Activated B cell treated with CpG ODN at 0.5 μM for 24 hours (primary cell): ENCODE measurements at regions of chr10 and their contacts with region 1.

Region 1: DNA sequence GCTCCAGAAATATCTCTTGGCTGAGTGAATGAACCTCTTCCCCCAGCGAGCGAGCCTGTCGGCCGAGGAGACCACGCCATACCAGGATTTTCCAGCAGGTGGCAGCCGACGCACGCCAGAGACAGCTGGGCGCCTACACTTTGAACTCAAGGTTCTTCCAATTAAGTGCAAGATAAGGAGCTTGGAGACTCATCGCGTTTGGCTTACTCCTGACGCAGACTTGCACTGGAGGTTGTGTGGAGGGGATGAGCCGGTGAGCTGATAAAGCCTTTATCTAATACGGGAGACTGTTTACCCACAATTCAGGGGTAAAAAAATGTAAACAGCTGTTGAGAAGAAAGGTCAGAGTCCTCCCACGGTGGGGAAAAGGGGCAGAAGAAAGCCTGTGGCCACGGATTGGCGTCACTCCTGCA is 45.9 kb upstream of the EMX2 start:
- DNase-seq: peak; percentile 58
- ATAC-seq: peak; percentile 47
- H3K4me3 Mint-ChIP-seq: no peak overlapping the region
- H3K27ac Mint-ChIP-seq: no peak overlapping the region
- H3K4me1 Mint-ChIP-seq: no peaks in the 10 kb centered on the region
- H3K27me3 Mint-ChIP-seq: peaks cover 22% of the 10 kb centered on the region
- CTCF ChIP-seq: peak; percentile 69

Region 2: DNA sequence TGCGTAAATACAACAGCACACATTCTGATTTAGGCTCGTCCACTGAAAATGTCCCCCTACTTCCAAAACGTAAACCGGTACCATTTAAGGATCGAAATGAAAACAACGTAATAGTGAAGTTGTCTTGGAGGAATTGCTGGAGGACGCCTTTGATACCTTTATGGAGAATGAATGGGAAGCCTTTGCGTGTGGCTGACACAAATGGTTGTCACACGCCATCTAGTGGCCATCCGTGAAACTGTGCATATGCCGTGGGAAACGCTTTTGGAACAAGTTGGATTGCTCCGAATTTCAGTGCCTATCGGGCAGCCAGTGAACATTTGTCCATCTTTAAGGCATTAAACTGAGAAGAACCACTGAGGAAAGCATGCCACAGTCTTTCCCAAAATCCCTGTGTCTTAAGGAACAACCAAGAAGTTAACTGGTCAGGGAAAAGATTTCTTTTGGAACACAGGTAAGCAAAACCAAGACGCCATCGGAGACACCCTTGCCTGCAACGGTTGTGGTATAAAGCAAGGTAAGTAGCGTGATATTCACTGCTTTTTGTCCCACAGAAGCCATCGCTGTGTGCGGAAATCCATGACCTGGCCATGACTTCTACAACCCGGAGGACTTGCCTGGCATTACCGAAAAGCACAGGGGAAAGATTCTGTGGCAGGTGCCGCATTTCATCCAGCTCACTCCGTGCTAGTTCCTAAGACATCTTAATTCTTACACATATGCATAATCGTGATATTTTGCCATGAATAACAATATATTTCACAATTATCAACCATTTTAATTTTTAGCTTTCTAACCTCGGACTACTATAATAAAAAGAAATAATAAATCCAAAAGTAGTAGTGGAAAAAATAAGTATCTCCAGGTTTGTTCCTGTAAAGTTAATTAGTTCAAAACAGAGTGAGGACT is 744.9 kb after region 1 on chr10:
- CTCF ChIA-PET with region 1: interaction called, 67 read pairs
- POLR2A ChIA-PET with region 1: no interaction called
- intact Hi-C with region 1: loop called (anchors 1 kb)
- DNase-seq: peak; percentile 36
- ATAC-seq: no peak
- H3K4me3 Mint-ChIP-seq: no peak overlapping the region
- H3K27ac Mint-ChIP-seq: no peak overlapping the region
- H3K4me1 Mint-ChIP-seq: no peaks in the 10 kb centered on the region
- H3K27me3 Mint-ChIP-seq: peaks cover 38% of the 10 kb centered on the region
- CTCF ChIP-seq: peak; percentile 99

Region 3: GRCh38 chr10:118423800-118424479 is 927.3 kb after region 1 on chr10:
- CTCF ChIA-PET with region 1: interaction called, 6 read pairs
- POLR2A ChIA-PET with region 1: no interaction called
- intact Hi-C with region 1: loop called (anchors 1 kb)
- DNase-seq: peak; percentile 16
- ATAC-seq: peak; percentile 37
- H3K4me3 Mint-ChIP-seq: no peak overlapping the region
- H3K27ac Mint-ChIP-seq: no peak overlapping the region
- H3K4me1 Mint-ChIP-seq: no peaks in the 10 kb centered on the region
- H3K27me3 Mint-ChIP-seq: peaks cover 5% of the 10 kb centered on the region
- CTCF ChIP-seq: no peak

Region 4: DNA sequence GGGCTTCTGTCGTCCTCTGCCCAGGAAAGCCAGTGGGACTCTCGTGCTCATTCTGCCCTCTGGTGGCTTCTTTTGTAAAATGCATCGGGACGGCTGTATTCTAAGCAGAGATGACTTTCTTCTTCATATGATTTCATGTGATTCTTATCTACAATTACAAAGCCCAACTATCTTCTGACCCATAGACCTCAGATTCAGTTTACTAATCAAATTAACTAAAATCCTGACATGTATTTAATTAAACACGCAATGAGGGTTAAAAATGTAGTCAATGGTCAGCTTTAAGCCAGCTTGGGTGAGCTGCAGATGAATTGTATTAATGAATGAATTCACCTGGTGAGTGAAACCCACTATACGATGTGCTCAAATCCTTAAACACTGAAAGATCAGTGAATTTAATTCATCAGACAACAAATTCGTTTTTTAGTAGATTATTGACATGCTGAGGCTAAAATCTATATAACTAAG is 963.1 kb after region 1 on chr10:
- CTCF ChIA-PET with region 1: interaction called, 33 read pairs
- POLR2A ChIA-PET with region 1: no interaction called
- intact Hi-C with region 1: loop called (anchors 1 kb)
- DNase-seq: no peak
- ATAC-seq: no peak
- H3K4me3 Mint-ChIP-seq: peak overlapping the region; percentile 44
- H3K27ac Mint-ChIP-seq: no peak overlapping the region
- H3K4me1 Mint-ChIP-seq: peaks cover 3% of the 10 kb centered on the region
- H3K27me3 Mint-ChIP-seq: peaks cover 29% of the 10 kb centered on the region
- CTCF ChIP-seq: peak; percentile 62

Region 5: GRCh38 chr10:118543714-118544400 is 1047.2 kb after region 1 on chr10:
- CTCF ChIA-PET with region 1: no interaction called
- POLR2A ChIA-PET with region 1: no interaction called
- intact Hi-C with region 1: loop called (anchors 2 kb)
- DNase-seq: no peak
- ATAC-seq: peak; percentile 37
- H3K4me3 Mint-ChIP-seq: no peak overlapping the region
- H3K27ac Mint-ChIP-seq: no peak overlapping the region
- H3K4me1 Mint-ChIP-seq: no peaks in the 10 kb centered on the region
- H3K27me3 Mint-ChIP-seq: peaks cover 52% of the 10 kb centered on the region
- CTCF ChIP-seq: no peak

Region 6: DNA sequence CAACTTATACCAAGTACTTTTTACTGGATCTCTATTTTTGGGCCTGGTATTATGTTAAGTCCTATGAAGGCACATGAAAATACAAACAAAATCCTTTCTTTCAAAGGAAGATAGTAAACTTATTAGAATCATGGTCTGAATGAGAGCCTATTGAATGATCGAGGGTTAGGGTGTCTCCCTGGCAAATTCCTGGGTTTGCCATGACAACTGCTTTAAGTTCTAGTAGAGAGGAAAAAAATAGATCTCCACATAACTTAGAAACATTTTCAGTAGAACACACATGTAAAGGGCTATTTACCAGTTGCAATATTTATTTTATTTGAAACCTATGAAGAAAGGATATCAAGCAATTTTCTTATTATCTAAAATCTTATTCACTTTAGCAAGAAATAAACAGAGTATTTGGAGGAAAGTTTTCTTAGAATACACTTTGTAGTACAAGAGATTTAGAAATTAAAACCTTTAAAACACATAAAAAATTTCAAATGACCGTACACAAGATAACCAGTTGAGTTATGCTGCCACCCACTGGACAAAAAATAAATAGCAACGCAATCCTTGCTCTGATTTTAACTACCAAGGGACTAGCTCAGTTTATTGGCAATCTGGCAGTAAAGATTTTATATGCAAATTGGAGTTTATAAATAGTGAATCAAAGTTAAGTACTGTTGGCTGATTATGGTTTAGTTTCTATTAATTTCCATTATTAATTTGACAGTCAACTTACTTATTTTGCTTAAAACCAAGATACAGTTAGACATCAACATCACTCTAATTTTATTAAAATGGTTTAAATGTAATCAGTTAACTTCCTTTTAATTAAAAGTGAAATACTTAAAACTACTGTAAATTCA is 1224.3 kb after region 1 on chr10:
- CTCF ChIA-PET with region 1: no interaction called
- POLR2A ChIA-PET with region 1: no interaction called
- intact Hi-C with region 1: loop called (anchors 2 kb)
- DNase-seq: no peak
- ATAC-seq: peak; percentile 56
- H3K4me3 Mint-ChIP-seq: no peak overlapping the region
- H3K27ac Mint-ChIP-seq: no peak overlapping the region
- H3K4me1 Mint-ChIP-seq: peaks cover 8% of the 10 kb centered on the region
- H3K27me3 Mint-ChIP-seq: no peaks in the 10 kb centered on the region
- CTCF ChIP-seq: peak; percentile 72